ENCODE measurements at regions of chr7 and their contacts with region 1.

Region 1: DNA sequence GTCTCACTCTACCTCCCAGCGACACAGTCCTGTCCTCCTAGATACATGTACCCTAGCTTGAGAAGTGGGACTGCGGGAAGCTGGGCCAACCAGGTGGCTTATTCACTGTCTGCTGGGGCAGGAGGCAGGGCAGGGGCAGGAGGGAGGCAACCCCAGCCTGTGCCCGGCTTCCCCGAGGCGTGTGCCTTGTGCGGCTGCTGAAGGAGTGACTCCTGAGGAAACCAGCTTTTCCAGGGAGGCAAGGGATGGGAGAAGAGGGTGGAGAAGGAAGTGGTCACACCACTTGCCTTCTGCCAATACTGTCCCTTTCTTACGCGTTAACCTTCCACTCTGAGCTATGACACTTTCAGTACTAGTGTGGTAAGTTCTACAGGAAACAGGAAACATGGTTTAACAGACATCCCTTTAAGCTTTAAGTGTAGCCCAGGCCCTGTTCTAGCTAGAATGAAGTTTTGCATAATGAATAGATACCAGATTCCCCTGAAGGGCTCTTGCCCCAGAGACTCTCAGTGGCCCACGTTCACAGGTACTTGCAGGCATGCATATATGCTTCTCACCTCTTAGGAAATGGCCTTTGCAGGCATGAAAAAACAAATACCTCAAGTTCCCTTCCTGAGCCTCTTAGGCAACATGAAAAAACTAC is 40.6 kb downstream of the SYPL1 start:
- DNase-seq: peak; percentile 76
- ATAC-seq: peak; percentile 95
- H3K4me3 Mint-ChIP-seq: peak overlapping the region; percentile 72
- H3K27ac Mint-ChIP-seq: peak overlapping the region; percentile 97
- H3K4me1 Mint-ChIP-seq: peaks cover 55% of the 10 kb centered on the region
- H3K27me3 Mint-ChIP-seq: no peaks in the 10 kb centered on the region
- CTCF ChIP-seq: no peak

Region 2: DNA sequence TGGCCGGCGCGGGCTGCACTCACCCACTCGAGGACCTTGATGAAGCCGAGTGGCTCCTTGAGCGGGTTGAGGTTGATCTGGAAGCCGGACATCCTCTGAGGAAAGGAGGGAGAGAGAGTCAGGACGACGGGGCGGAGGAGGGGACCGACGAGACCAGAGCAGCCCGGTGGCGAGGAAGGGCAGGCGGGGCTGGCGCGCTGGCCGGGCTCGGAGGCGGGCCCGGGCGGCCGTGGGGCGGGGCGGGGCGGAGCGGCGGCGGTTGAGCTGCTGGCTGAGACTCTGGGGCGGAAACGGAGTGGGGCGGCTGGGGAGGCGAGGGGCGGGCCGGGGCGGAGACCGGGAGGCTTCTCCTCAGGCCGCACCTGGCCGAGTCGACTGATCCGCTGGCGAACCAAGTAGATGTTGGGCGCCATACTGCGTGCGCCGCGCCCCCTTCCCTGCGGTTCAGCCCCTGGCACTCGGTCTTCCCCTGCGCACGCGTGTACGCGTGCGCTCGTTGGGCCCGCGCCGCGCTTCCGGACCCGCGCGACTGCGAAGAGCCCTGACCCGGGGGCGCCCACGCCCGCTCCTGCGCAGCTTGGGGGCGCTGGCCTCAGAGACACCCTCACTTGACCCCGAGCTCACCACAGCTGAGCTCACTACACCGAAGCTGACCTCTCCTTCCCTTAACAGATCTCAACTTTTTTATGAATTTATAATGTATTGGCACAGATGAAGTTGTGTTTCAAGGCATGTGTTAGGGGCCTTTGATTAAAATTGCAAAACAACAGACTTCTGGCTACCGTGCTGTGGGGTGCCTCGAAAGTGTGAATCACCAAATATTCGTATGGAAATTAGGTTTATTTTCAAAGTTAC is 40.9 kb after region 1 on chr7 and contains the start of gene SYPL1:
- CTCF ChIA-PET with region 1: interaction called, 10 read pairs
- POLR2A ChIA-PET with region 1: interaction called, 21 read pairs
- intact Hi-C with region 1: loop called (anchors 2 kb)
- DNase-seq: peak; percentile 94
- ATAC-seq: peak; percentile 87
- H3K4me3 Mint-ChIP-seq: peak within 1 kb of the TSS; percentile 84
- H3K27ac Mint-ChIP-seq: peak within 1 kb of the TSS; percentile 95
- H3K4me1 Mint-ChIP-seq: peaks cover 61% of the 10 kb centered on the region
- H3K27me3 Mint-ChIP-seq: no peaks in the 10 kb centered on the region
- CTCF ChIP-seq: no peak
- total RNA-seq, gene SYPL1: 40.1 to 44.6 TPM

Region 3: DNA sequence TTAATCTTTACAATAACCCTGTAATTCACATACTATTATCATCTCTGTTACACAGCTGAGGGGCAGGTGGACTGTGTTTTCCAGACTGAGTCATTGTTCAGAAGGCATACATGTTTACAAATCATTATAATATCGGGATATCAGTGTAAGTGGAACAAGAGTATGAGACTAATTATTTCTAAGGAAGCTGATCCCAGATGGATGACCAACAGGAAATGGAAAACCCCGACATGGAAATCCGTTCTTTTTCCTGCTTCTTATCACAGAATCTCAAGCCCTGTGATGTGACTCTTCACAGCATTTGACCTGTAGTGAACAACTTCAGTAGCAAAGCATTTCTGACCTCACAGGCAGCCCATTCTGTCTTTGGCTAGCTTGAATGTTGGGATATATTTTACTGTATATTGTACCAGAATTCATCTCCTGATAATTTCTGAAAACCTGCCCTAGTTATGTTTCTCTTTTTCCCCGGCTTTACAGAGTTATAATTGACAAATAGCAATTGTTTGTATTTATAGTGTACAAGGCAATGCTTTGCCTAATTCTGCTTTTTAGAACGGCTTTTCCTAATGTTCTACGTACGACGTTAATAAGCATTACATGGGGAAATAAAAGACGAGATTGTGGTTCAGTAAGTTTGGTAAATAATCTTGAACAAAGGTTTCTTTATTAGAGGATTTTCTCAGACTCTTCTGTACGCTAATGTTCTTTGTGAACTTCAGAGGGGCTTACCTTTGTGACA is 119.3 kb after region 1 on chr7:
- CTCF ChIA-PET with region 1: no interaction called
- POLR2A ChIA-PET with region 1: no interaction called
- intact Hi-C with region 1: no loop called
- DNase-seq: no peak
- ATAC-seq: no peak
- H3K4me3 Mint-ChIP-seq: no peak overlapping the region
- H3K27ac Mint-ChIP-seq: no peak overlapping the region
- H3K4me1 Mint-ChIP-seq: no peaks in the 10 kb centered on the region
- H3K27me3 Mint-ChIP-seq: peaks cover 16% of the 10 kb centered on the region
- CTCF ChIP-seq: no peak

Measured in activated CD8-positive, alpha-beta T cell treated with anti-CD3 and anti-CD28 coated beads for 36 hours (primary cell).